Lower leg skin (tissue), 4 donors: ENCODE measurements at regions of chr14 and their contacts with region 1.

Region 1: GRCh38 chr14:99518441-99519346 is 37.5 kb downstream of the CCNK start:
- DNase-seq: peak; percentile 61 to 95
- H3K4me3 ChIP-seq: no peak overlapping the region
- CTCF ChIP-seq: peak in 1 of 3 donors; percentile 89
- POLR2A ChIP-seq: no peak

Region 2: DNA sequence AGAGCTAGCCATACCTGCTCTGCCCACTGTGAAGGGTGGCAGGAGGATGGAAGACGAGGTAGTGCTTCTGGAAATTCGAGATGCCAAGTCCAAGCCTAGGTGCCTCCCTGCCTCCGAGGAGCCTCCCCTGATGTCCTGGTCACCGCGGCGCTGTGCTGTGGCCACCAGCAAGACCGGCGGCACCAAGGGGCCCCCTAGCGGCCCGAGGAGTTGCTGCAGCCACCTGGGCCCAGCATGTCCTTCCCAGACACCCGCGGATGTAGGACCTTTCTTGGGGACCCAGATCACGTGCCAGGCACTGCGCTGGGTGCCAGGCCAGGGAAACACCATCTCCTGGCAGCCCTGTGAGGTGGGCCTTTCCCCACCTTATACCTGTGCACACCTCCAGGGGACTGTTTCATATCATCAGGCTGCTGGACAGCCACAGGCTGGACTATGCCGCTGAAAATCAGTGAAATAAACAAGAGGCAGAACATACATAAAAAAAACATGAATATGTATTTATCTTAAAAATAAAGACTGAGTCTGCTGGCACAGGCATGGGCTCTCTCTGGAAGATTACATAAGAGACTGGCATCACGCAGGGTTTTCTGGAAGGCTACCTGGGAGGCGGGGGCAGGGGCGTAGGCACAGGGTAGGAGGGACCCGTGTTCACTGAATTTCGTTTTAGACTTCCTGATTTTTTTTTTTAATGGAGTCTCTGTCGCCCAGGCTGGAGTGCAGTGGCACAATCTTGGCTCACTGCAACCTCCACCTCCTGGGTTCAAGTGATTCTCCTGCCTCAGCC is 110.3 kb after region 1 on chr14:
- intact Hi-C with region 1: loop called (anchors 2 kb)
- DNase-seq: peak; percentile 59 to 94
- H3K4me3 ChIP-seq: no peak overlapping the region
- CTCF ChIP-seq: peak in 1 of 3 donors; percentile 75
- POLR2A ChIP-seq: no peak